ENCODE measurements at regions of chr19 and their contacts with region 1.

Region 1: DNA sequence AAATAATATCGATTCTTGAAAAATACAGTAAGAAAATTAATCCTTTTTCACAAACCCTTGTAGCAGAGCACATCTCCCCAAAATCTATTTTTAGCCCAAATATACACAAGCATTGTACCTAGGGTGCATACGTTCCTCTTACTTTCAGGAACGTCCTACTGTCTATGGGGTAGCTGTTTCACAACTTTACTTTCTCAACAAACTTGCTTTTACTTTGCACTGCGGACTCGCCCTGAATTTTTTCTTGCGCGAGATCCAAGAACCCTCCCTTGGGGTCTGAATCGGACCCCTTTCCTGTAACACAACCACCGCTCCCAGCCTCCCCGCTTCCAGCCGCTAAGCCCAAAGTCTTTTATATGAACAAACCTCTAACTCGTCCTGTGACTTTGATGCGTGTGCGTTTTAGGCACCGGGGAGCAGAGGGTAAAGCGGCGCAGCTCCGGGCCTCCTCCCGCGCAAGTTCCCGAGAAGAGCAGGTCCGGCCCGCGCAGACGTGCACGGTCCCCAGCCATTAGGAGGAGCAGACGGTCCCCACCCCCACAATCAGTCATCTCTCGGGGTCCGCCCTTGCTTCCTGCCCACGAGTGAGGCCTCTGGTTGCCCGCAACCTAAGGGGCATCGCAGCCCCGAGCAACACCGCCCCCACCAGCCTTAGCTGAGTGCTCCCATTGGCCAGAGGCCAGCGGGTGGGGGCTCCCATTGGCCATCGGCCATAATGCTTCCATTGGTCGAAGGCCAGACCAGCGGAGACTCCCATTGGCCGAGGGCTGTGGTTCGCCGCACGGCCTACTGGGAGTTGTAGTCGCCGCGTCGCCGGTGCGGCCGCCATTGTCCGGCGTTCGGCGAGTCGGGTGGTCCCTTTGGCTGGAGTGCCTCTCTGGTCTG is at the start of gene ZNF8:
- DNase-seq: peak; percentile 99
- H3K4me3 ChIP-seq: peak within 1 kb of the TSS; percentile 87
- H3K27ac ChIP-seq: peak within 1 kb of the TSS; percentile 84
- H3K4me1 ChIP-seq: no peaks in the 10 kb centered on the region
- H3K27me3 ChIP-seq: no peaks in the 10 kb centered on the region
- CTCF ChIP-seq: no peak
- total RNA-seq, gene ZNF8: 11.9 and 12.5 TPM in 2 replicates

Region 2: GRCh38 chr19:58228585-58229254 is 49.7 kb before region 1 on chr19 and contains the start of gene ZNF544:
- CTCF ChIA-PET with region 1: no interaction called
- POLR2A ChIA-PET with region 1: no interaction called
- intact Hi-C with region 1: loop called (anchors 2 kb)
- DNase-seq: peak; percentile 87
- H3K4me3 ChIP-seq: peak within 1 kb of the TSS; percentile 76
- H3K27ac ChIP-seq: peak within 1 kb of the TSS; percentile 84
- H3K4me1 ChIP-seq: peaks cover 3% of the 10 kb centered on the region
- H3K27me3 ChIP-seq: no peaks in the 10 kb centered on the region
- CTCF ChIP-seq: no peak; the same call in 1 of the 2 replicates
- total RNA-seq, gene ZNF544: 44.8 and 50.5 TPM in 2 replicates

Region 3: GRCh38 chr19:58261968-58262921 is 16.2 kb before region 1 on chr19:
- CTCF ChIA-PET with region 1: no interaction called
- POLR2A ChIA-PET with region 1: interaction called, 15 read pairs
- intact Hi-C with region 1: no loop called
- DNase-seq: no peak
- H3K4me3 ChIP-seq: no peak overlapping the region
- H3K27ac ChIP-seq: no peak overlapping the region
- H3K4me1 ChIP-seq: no peaks in the 10 kb centered on the region
- H3K27me3 ChIP-seq: no peaks in the 10 kb centered on the region
- CTCF ChIP-seq: no peak

Region 4: GRCh38 chr19:58305065-58305931 is 26.9 kb after region 1 on chr19 and contains the start of gene ERVK3-1:
- CTCF ChIA-PET with region 1: no interaction called
- POLR2A ChIA-PET with region 1: interaction called, 3 read pairs
- intact Hi-C with region 1: loop called (anchors 2 kb)
- DNase-seq: peak; percentile 99
- H3K4me3 ChIP-seq: peak within 1 kb of the TSS; percentile 83
- H3K27ac ChIP-seq: peak within 1 kb of the TSS; percentile 87
- H3K4me1 ChIP-seq: peaks cover 8% of the 10 kb centered on the region
- H3K27me3 ChIP-seq: no peaks in the 10 kb centered on the region
- CTCF ChIP-seq: no peak
- total RNA-seq, gene ERVK3-1: 57.8 and 77.1 TPM in 2 replicates

Region 5: GRCh38 chr19:58400916-58401839 is 122.8 kb after region 1 on chr19:
- CTCF ChIA-PET with region 1: no interaction called
- POLR2A ChIA-PET with region 1: no interaction called
- intact Hi-C with region 1: no loop called
- DNase-seq: peak; percentile 100
- H3K4me3 ChIP-seq: peak overlapping the region; percentile 72
- H3K27ac ChIP-seq: peak overlapping the region; percentile 88
- H3K4me1 ChIP-seq: peaks cover 14% of the 10 kb centered on the region
- H3K27me3 ChIP-seq: no peaks in the 10 kb centered on the region
- CTCF ChIP-seq: no peak

Measured in A673 (cell line).